Left cardiac atrium (tissue), 4 donors: ENCODE measurements at regions of chr7 and their contacts with region 1.

Region 1: GRCh38 chr7:43582503-43583423 is at the start of gene STK17A:
- DNase-seq: peak; percentile 91
- ATAC-seq: peak; percentile 96 to 99
- total RNA-seq, gene STK17A: 12.2 to 18.0 TPM

Region 2: DNA sequence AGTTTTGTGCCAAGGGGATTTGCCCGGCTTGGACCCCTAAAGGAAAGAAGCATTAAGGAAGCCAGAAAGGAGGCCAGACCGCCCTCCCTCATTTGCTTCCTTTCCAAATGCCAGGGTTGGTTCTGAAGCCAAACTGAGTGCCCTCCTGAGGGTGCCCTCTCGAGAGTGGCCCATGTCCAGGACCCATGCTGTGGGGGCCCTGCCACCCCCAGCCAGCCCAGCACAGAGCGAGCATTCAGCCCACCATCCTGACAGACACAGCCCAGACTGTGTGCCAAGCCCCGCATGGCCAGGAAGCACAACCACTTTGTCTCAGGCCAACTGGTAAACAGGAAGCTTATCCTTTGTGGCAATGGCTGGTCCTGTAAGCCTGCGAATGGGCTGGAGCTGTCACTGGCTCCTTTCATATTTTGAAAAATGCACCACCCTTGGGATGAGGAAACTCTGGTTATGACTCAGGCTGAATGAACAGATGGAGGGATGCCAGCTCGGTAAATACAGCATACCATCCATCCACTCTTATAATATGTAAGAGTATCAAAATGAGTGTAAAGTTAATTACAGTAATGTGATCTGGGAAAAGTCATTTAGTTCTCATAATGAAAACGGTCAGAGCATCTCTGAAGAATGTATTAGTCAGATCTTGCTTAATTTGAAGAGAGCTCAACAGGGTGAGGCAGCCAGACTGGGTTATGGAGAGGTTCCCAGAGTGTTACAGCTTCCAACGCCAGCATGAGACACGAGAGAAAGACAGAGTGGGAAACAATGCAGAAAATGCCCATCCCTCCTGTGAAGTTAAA is 65.1 kb after region 1 on chr7:
- intact Hi-C with region 1: no loop called
- DNase-seq: peak; percentile 62
- ATAC-seq: peak; percentile 58 to 84

Region 3: DNA sequence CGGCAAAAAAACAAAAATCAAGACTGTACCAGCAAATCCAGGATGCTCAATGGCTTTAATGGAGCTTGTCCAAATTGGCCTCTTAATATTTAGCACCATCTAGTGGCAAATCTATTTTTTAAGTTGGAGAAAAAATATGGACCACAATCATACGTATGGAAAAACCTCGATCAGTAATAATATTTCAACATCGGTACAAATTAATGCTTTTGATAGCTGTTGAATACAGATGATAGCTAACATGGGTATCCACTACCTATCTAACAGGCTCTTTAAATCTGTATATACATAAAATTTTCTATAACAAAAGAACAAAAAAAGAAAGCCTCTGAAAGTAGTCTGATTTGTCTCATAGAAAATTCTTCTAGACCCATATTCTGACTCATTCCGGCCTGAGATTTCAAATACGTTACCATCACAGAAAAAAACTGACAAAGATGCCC is 117.3 kb after region 1 on chr7:
- intact Hi-C with region 1: loop called (anchors 1 to 2 kb)
- DNase-seq: no peak
- ATAC-seq: peak; percentile 59 to 61

Region 4: GRCh38 chr7:43721193-43721806 is 138.5 kb after region 1 on chr7:
- intact Hi-C with region 1: loop called (anchors 2 to 5 kb)
- DNase-seq: no peak
- ATAC-seq: no peak

Region 5: GRCh38 chr7:43729214-43729923 is 146.6 kb after region 1 on chr7 and contains the start of gene COA1:
- intact Hi-C with region 1: loop called (anchors 2 to 5 kb)
- DNase-seq: peak; percentile 90
- ATAC-seq: peak; percentile 99
- total RNA-seq, gene COA1: 52.7 to 55.4 TPM

Region 6: DNA sequence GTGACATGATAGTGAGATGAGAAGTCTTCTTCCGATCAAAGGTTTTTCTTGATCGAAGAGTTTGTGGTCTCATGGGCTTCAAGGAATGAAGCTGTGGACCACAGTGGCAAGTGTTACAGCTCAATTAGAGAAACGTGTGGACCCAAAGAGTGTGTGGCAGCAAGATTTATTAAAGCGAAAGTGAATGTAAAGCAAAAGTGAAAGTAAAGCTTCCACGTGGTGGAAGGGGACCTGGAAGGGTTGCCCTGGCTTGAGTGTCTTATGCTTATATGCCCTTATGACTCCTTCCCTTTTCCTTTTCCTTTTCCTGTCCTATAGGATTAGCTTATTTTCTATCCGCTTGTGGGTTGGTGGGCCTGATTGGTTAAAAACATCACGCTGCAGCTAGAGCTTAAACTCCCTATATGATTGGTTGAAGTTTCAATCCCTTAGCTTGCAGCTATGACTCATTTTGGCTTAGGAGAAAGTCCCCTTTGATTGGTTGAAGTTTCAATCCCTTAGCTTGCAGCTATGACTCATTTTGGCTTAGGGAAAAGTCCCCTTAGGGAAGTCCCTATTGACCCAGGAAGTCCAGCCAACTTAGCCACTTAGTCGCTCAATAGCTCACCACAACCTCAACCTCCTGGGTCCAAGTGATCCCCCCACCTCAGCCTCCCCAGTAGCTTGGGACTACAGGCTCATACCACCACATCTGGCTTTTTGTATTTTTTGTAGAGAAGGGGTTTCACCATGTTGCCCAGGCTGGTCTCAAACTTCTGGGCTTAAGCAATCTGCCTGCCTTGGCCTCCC is 251.9 kb after region 1 on chr7:
- intact Hi-C with region 1: loop called in 1 of 2 experiments (anchors 5 kb)
- DNase-seq: no peak
- ATAC-seq: no peak